Naive thymus-derived CD4-positive, alpha-beta T cell (primary cell): ENCODE measurements at regions of chr10 and their contacts with region 1.

Region 1: GRCh38 chr10:79068562-79069324 is at the start of gene ZMIZ1:
- DNase-seq: peak; percentile 74 to 86 (median 84)
- ATAC-seq: peak; percentile 78
- H3K4me3 ChIP-seq: peak within 1 kb of the TSS; percentile 83
- H3K4me3 Mint-ChIP-seq: peak within 1 kb of the TSS; percentile 92 to 98 (median 96)
- H3K27ac ChIP-seq: peak within 1 kb of the TSS; percentile 62
- H3K27ac Mint-ChIP-seq: peak within 1 kb of the TSS; percentile 57 to 97 (median 91)
- H3K4me1 ChIP-seq: peaks cover 11 to 24% of the 10 kb centered on the region in 2 donors
- H3K4me1 Mint-ChIP-seq: peaks cover 21 to 65% (median 53%) of the 10 kb centered on the region in 7 donors
- H3K27me3 ChIP-seq: no peaks in the 10 kb centered on the region
- H3K27me3 Mint-ChIP-seq: peaks cover 0 to 25% (median 0%) of the 10 kb centered on the region in 5 donors
- total RNA-seq, gene ZMIZ1: 13.5 to 57.2 (median 24.5) TPM

Region 2: GRCh38 chr10:78029269-78030226 is 1039.2 kb before region 1 on chr10 and contains the start of gene POLR3A:
- CTCF ChIA-PET with region 1: no interaction called
- POLR2A ChIA-PET with region 1: no interaction called
- intact Hi-C with region 1: loop called (anchors 1 to 5 kb)
- DNase-seq: peak; percentile 79 to 94 (median 90)
- ATAC-seq: peak; percentile 77
- H3K4me3 ChIP-seq: peak within 1 kb of the TSS; percentile 99
- H3K4me3 Mint-ChIP-seq: peak within 1 kb of the TSS; percentile 92 to 100 (median 99)
- H3K27ac ChIP-seq: peak within 1 kb of the TSS; percentile 89
- H3K27ac Mint-ChIP-seq: peak within 1 kb of the TSS; percentile 88 to 99 (median 95)
- H3K4me1 ChIP-seq: peaks cover 12 to 19% of the 10 kb centered on the region in 2 donors
- H3K4me1 Mint-ChIP-seq: peaks cover 22 to 50% (median 37%) of the 10 kb centered on the region in 7 donors
- H3K27me3 ChIP-seq: no peaks in the 10 kb centered on the region
- H3K27me3 Mint-ChIP-seq: no peaks in the 10 kb centered on the region
- total RNA-seq, gene POLR3A: 12.0 to 20.9 (median 19.0) TPM

Region 3: DNA sequence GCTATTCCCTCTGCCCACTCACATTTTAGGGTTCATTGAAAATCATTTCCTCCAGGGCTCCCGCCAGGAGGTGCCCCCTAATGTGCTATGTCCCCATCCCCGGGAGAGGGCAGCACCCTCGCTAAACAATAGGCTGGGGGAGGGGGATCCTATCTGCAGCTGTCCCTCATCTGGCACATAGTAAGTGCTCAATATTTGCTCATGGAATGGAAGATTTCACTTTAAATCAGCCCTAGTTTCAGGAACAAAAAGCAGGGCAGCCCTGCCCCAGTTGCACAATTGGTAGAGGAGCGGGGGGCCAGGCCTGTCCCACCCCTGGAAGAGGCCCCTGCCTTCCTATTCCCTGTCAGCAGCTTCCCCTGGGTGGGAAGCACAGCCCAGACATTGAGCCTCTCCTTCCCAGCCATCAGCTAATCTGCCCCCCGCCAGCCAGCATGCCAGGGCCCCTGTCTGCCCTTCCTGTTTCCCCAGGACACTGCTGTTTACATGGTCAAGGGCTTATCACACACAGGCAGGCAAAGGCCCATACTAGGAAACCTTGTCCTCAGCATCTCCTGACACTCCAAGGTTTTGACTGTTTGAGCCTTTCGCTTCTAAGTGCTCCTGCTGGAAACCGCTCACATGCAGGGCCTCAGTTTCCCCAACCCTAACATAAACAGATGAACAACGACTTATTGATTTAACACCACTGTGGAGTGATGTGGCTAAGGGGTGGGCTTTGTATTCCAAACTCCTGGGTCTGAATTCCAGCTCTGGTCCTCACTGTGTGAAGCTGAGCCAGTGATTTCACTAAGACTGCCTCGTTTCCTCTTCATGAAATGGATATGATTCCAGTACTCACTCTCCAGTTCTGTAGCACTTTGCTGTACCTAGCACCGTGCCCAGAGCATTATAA is 130.7 kb before region 1 on chr10:
- CTCF ChIA-PET with region 1: no interaction called
- POLR2A ChIA-PET with region 1: no interaction called
- intact Hi-C with region 1: loop called in 1 of 2 experiments (anchors 1 kb)
- DNase-seq: peak in 2 of 9 donors; percentile 12 to 24
- ATAC-seq: peak; percentile 39
- H3K4me3 ChIP-seq: no peak overlapping the region
- H3K4me3 Mint-ChIP-seq: no peak overlapping the region
- H3K27ac ChIP-seq: no peak overlapping the region
- H3K27ac Mint-ChIP-seq: peak overlapping the region in 2 of 9 donors; percentile 54 to 72
- H3K4me1 ChIP-seq: no peaks in the 10 kb centered on the region
- H3K4me1 Mint-ChIP-seq: peaks cover 0 to 2% (median 0%) of the 10 kb centered on the region in 7 donors
- H3K27me3 ChIP-seq: no peaks in the 10 kb centered on the region
- H3K27me3 Mint-ChIP-seq: no peaks in the 10 kb centered on the region

Region 4: GRCh38 chr10:79137826-79138225 is 69.1 kb after region 1 on chr10:
- CTCF ChIA-PET with region 1: no interaction called
- POLR2A ChIA-PET with region 1: interaction called, 3 read pairs
- intact Hi-C with region 1: loop called in 1 of 2 experiments (anchors 5 kb)
- DNase-seq: peak in 5 of 9 donors; percentile 16 to 45 (median 27)
- ATAC-seq: peak; percentile 71
- H3K4me3 ChIP-seq: peak overlapping the region; percentile 41
- H3K4me3 Mint-ChIP-seq: peak overlapping the region; percentile 47 to 80 (median 71)
- H3K27ac ChIP-seq: peak overlapping the region; percentile 49
- H3K27ac Mint-ChIP-seq: peak overlapping the region; percentile 62 to 93 (median 86)
- H3K4me1 ChIP-seq: peaks cover 28 to 40% of the 10 kb centered on the region in 2 donors
- H3K4me1 Mint-ChIP-seq: peaks cover 36 to 64% (median 56%) of the 10 kb centered on the region in 7 donors
- H3K27me3 ChIP-seq: no peaks in the 10 kb centered on the region
- H3K27me3 Mint-ChIP-seq: no peaks in the 10 kb centered on the region

Region 5: DNA sequence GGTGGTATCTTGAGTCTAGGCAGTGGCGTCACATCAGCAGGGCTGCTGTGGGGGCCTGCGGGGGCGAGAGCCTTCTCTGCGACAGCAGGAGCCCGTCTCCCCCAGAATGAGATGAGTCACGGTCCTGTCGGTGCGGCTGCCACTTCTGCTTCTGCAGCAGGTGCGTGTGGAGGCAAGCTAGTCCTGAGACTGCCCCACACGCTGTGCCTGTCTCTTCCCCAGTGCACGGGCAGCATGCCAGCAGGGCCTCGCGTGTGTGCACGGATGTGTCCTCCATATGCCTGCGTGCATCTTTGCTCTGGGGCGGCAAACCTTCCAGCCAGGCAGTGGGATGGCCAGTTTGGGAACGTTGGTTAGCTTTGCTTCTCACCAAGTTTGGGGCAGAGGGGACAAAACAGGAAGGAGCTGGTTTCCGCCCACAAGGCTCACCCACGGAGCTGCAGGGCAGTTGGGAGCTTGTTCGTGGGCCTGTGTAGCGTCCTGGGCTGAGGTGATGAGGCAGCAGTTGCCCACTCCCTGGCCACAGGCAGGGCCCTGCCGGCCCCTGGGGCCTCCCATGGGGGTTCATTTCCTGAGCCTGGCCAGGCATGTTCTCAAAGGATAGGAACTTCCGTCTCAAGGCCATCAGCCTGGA is 217.7 kb after region 1 on chr10:
- CTCF ChIA-PET with region 1: no interaction called
- POLR2A ChIA-PET with region 1: no interaction called
- intact Hi-C with region 1: loop called in 1 of 2 experiments (anchors 5 kb)
- DNase-seq: peak; percentile 51 to 80 (median 75)
- ATAC-seq: peak; percentile 92
- H3K4me3 ChIP-seq: peak overlapping the region; percentile 34
- H3K4me3 Mint-ChIP-seq: peak overlapping the region; percentile 70 to 80 (median 74)
- H3K27ac ChIP-seq: no peak overlapping the region
- H3K27ac Mint-ChIP-seq: peak overlapping the region; percentile 49 to 88 (median 66)
- H3K4me1 ChIP-seq: peaks cover 21 to 31% of the 10 kb centered on the region in 2 donors
- H3K4me1 Mint-ChIP-seq: peaks cover 24 to 52% (median 38%) of the 10 kb centered on the region in 7 donors
- H3K27me3 ChIP-seq: no peaks in the 10 kb centered on the region
- H3K27me3 Mint-ChIP-seq: no peaks in the 10 kb centered on the region

Region 6: GRCh38 chr10:79445141-79445976 is 376.6 kb after region 1 on chr10 and contains the start of gene ZCCHC24:
- CTCF ChIA-PET with region 1: no interaction called
- POLR2A ChIA-PET with region 1: no interaction called
- intact Hi-C with region 1: loop called (anchors 1 to 10 kb)
- DNase-seq: peak; percentile 83 to 95 (median 92)
- ATAC-seq: peak; percentile 95
- H3K4me3 ChIP-seq: peak within 1 kb of the TSS; percentile 78
- H3K4me3 Mint-ChIP-seq: peak within 1 kb of the TSS; percentile 86 to 99 (median 91)
- H3K27ac ChIP-seq: peak within 1 kb of the TSS; percentile 67
- H3K27ac Mint-ChIP-seq: peak within 1 kb of the TSS; percentile 27 to 91 (median 84)
- H3K4me1 ChIP-seq: peaks cover 10% of the 10 kb centered on the region in 2 donors
- H3K4me1 Mint-ChIP-seq: peaks cover 20 to 35% (median 28%) of the 10 kb centered on the region in 7 donors
- H3K27me3 ChIP-seq: no peaks in the 10 kb centered on the region
- H3K27me3 Mint-ChIP-seq: peaks cover 0 to 44% (median 0%) of the 10 kb centered on the region in 5 donors
- total RNA-seq, gene ZCCHC24: 0.58 to 2.0 (median 0.76) TPM